Panc1 (cell line): ENCODE measurements at regions of chr6 and their contacts with region 1.

Region 1: GRCh38 chr6:146876271-146877151 is 277.7 kb downstream of the ADGB start:
- DNase-seq: no peak
- ATAC-seq: no peak
- H3K4me3 ChIP-seq: no peak overlapping the region
- H3K27ac ChIP-seq: peak overlapping the region; percentile 30; the same call in 1 of the 2 replicates
- H3K4me1 ChIP-seq: no peaks in the 10 kb centered on the region
- H3K27me3 ChIP-seq: no peaks in the 10 kb centered on the region
- CTCF ChIP-seq: no peak

Region 2: DNA sequence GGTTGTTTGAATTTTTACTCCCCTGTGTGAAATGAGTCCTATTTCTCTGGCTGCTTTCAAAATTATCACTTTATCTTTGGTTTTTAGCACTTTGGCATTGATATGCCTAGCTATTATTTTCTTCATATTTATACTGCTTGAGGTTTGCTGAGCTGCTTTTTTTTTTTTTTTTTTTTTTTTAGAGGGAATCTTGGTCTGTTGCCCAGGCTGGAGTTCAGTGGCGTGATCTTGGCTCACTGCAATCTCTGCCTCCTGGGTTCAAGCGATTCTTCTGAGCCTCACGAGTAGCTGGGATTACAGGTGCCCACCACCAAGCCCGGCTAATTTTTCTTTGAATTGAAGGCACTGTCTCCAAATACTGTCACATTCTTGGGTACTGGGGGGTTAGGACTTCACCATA is 368.3 kb after region 1 on chr6:
- CTCF ChIA-PET with region 1: no interaction called
- POLR2A ChIA-PET with region 1: interaction called, 12 read pairs
- in situ Hi-C with region 1: no loop called
- intact Hi-C with region 1: no loop called
- DNase-seq: no peak
- ATAC-seq: no peak
- H3K4me3 ChIP-seq: no peak overlapping the region
- H3K27ac ChIP-seq: no peak overlapping the region
- H3K4me1 ChIP-seq: no peaks in the 10 kb centered on the region
- H3K27me3 ChIP-seq: no peaks in the 10 kb centered on the region
- CTCF ChIP-seq: no peak